Activated B cell treated with CpG ODN at 0.5 μM for 24 hours (primary cell): ENCODE measurements at regions of chr11 and their contacts with region 1.

Region 1: GRCh38 chr11:5791165-5791564 is at the start of gene OR52N1:
- DNase-seq: no peak
- ATAC-seq: no peak
- H3K4me3 Mint-ChIP-seq: no peak within 1 kb of the TSS
- H3K27ac Mint-ChIP-seq: no peak within 1 kb of the TSS
- H3K4me1 Mint-ChIP-seq: no peaks in the 10 kb centered on the region
- H3K27me3 Mint-ChIP-seq: peaks cover 4% of the 10 kb centered on the region
- CTCF ChIP-seq: no peak
- total RNA-seq, gene OR52N1: not detected in 2 replicates

Region 2: DNA sequence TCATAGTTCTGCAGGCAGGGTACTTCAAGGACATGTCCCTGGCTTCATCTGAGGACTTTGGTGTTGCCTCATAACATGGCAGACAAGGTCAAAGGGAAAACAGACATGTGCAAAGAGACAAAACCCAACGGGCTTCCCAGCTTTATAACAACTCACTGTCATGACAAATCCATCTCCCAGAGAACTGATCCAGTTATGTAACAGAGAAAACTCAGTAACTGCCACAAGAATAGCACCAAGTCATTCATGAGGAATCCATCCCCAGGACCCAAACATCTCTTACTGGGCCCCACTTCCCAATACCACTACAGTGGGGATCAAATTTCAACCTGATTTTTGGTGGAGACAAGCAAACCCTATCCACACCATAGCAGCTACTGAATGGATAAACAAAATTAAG is 24.1 kb before region 1 on chr11:
- CTCF ChIA-PET with region 1: no interaction called
- POLR2A ChIA-PET with region 1: no interaction called
- intact Hi-C with region 1: loop called (anchors 1 kb)
- DNase-seq: no peak
- ATAC-seq: no peak
- H3K4me3 Mint-ChIP-seq: no peak overlapping the region
- H3K27ac Mint-ChIP-seq: no peak overlapping the region
- H3K4me1 Mint-ChIP-seq: no peaks in the 10 kb centered on the region
- H3K27me3 Mint-ChIP-seq: no peaks in the 10 kb centered on the region
- CTCF ChIP-seq: no peak

Region 3: DNA sequence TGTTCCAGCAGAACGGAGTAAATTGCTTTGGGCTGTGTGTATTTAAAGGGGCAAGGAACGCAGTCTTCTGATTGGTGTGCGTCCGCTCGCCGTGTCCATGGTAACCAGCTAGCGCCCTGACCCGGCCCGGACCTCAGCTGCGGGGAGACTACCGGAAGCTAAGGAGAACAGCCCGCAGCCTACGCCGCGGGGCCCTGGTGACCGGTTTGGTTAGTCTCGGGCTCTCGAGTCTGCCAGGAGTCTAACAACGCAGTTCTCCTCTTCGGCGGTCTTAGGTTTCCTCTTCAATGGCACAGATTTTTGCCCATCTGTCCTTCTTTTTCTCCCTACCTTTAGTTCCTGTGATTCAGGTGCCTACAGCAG is 147.4 kb after region 1 on chr11:
- CTCF ChIA-PET with region 1: no interaction called
- POLR2A ChIA-PET with region 1: no interaction called
- intact Hi-C with region 1: no loop called
- DNase-seq: no peak
- ATAC-seq: no peak
- H3K4me3 Mint-ChIP-seq: no peak overlapping the region
- H3K27ac Mint-ChIP-seq: no peak overlapping the region
- H3K4me1 Mint-ChIP-seq: no peaks in the 10 kb centered on the region
- H3K27me3 Mint-ChIP-seq: peaks cover 5% of the 10 kb centered on the region
- CTCF ChIP-seq: no peak